Ovary (tissue), 10 donors: ENCODE measurements at regions of chr18 and their contacts with region 1.

Region 1: GRCh38 chr18:9405977-9406376 is 69.3 kb upstream of the RALBP1 start:
- DNase-seq: no peak
- H3K4me3 ChIP-seq: no peak overlapping the region
- H3K27ac ChIP-seq: no peak overlapping the region
- H3K4me1 ChIP-seq: no peaks in the 10 kb centered on the region
- H3K27me3 ChIP-seq: no peaks in the 10 kb centered on the region
- CTCF ChIP-seq: no peak
- EP300 ChIP-seq: no peak
- POLR2A ChIP-seq: no peak

Region 2: GRCh38 chr18:9233771-9234440 is 172.1 kb before region 1 on chr18:
- intact Hi-C with region 1: no loop called
- DNase-seq: no peak
- H3K4me3 ChIP-seq: no peak overlapping the region
- H3K27ac ChIP-seq: no peak overlapping the region
- H3K4me1 ChIP-seq: no peaks in the 10 kb centered on the region
- H3K27me3 ChIP-seq: no peaks in the 10 kb centered on the region
- CTCF ChIP-seq: no peak
- EP300 ChIP-seq: no peak
- POLR2A ChIP-seq: no peak

Region 3: GRCh38 chr18:9419956-9420631 is 14.1 kb after region 1 on chr18:
- intact Hi-C with region 1: loop called in 1 of 4 experiments (anchors 2 kb)
- DNase-seq: no peak
- H3K4me3 ChIP-seq: no peak overlapping the region
- H3K27ac ChIP-seq: no peak overlapping the region
- H3K4me1 ChIP-seq: peaks cover 4% of the 10 kb centered on the region
- H3K27me3 ChIP-seq: no peaks in the 10 kb centered on the region
- CTCF ChIP-seq: no peak
- EP300 ChIP-seq: no peak
- POLR2A ChIP-seq: no peak

Region 4: GRCh38 chr18:9619545-9619944 is 213.6 kb after region 1 on chr18:
- intact Hi-C with region 1: no loop called
- DNase-seq: no peak
- H3K4me3 ChIP-seq: no peak overlapping the region
- H3K27ac ChIP-seq: no peak overlapping the region
- H3K4me1 ChIP-seq: peaks cover 3% of the 10 kb centered on the region
- H3K27me3 ChIP-seq: no peaks in the 10 kb centered on the region
- CTCF ChIP-seq: no peak
- EP300 ChIP-seq: no peak
- POLR2A ChIP-seq: no peak